Left lung (tissue), 14 donors: ENCODE measurements at regions of chr5 and their contacts with region 1.

Region 1: DNA sequence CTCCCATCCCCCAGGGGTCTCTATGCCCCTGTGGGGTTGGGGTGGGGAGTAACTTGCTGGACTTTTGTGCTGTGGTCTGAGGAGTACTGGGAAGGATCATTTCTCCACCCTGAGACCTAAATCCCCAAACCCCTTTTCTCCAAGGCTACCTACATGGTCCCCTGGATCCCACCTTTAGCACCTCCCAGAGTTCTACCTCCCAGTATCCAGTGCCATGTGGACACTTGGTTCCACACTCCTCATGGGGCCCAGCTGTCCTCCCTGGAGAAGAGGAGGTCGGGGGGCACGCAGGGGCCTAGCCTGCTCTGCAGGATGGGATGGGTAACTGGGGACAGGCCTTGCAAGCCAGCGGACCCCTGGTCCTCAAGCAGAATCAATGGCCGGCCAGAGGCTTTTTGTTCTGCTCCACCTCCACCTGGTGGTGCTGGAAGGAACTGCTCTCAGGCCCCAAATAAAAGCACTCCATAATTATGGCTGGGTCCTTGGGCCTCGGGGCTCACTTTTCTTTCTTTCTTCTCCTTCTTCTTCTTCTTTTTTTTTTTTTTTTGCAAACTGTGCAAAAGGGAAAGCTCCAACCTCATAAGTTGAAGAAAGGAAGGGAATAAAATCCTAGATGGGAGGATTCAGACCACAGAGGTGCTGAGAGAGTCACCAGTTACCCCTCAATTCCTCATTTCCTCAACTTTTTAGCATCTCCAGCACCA is 68.4 kb downstream of the PSD2 start:
- DNase-seq: peak in 2 of 4 donors; percentile 63 to 80
- ATAC-seq: peak; percentile 90
- H3K4me3 ChIP-seq: no peak overlapping the region
- H3K27ac ChIP-seq: peak overlapping the region in 1 of 2 donors; percentile 8
- H3K4me1 ChIP-seq: peaks cover 4 to 11% of the 10 kb centered on the region in 2 donors
- H3K27me3 ChIP-seq: no peaks in the 10 kb centered on the region
- CTCF ChIP-seq: peak; percentile 83 to 93

Region 2: GRCh38 chr5:139787568-139788293 is 76.3 kb before region 1 on chr5:
- intact Hi-C with region 1: loop called in 1 of 2 experiments (anchors 5 kb)
- DNase-seq: peak; percentile 79 to 95 (median 84)
- ATAC-seq: peak; percentile 97
- H3K4me3 ChIP-seq: peak overlapping the region; percentile 42 to 52
- H3K27ac ChIP-seq: peak overlapping the region in 1 of 2 donors; percentile 18
- H3K4me1 ChIP-seq: peaks cover 0 to 13% of the 10 kb centered on the region in 2 donors
- H3K27me3 ChIP-seq: peaks cover 0 to 37% of the 10 kb centered on the region in 2 donors
- CTCF ChIP-seq: peak; percentile 88 to 95

Region 3: GRCh38 chr5:139810341-139811273 is 53.4 kb before region 1 on chr5:
- intact Hi-C with region 1: no loop called
- DNase-seq: no peak
- ATAC-seq: no peak
- H3K4me3 ChIP-seq: no peak overlapping the region
- H3K27ac ChIP-seq: no peak overlapping the region
- H3K4me1 ChIP-seq: no peaks in the 10 kb centered on the region
- H3K27me3 ChIP-seq: peaks cover 0 to 29% of the 10 kb centered on the region in 2 donors
- CTCF ChIP-seq: no peak

Region 4: DNA sequence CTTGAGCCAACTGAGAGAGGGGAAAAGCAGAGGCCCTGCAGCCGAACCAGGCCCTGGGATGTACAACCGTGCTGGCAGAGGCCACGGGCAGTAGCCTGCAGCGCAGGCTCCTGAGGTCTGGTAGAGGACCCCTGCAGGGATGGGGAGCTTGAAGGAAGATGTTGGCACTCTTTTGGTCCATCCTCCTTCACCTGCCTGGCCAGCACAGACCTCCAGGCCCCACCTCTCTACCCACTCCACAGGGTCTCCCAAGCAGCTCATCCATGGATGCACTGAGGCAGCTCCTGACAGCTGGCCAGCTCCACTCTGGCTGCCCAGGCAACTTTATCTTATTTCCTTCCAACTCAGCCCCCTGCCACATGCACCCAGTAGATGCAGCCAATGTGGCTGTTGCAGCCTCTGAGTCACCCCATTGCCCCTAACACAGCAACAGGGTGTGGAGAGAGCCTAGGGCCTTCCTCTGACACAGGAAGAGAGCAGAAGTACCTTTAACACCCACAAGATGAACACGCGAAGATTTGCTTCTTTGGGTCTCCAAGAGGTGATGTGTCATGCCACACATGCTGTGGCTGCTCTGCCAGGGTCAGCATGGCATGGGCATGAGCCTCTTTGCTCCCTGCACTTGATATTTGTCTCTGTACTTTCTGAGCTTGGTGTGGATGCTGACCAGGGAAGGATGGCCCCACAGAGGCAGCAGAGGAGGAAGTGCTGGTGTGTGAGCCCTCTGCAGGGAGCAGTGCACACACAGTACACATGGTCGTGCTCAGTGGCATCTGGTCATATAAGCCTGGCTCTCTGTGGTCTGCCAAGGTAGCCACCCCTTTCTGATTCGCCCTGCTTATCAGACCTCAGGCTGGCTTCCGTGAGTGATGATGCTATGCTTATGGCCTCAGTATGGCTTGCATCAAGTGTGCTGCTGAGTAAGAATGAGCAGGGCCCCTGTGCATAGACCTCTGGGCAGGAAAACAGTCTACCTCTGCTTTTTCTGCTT is 61.9 kb after region 1 on chr5:
- intact Hi-C with region 1: no loop called
- DNase-seq: no peak
- ATAC-seq: no peak
- H3K4me3 ChIP-seq: no peak overlapping the region
- H3K27ac ChIP-seq: no peak overlapping the region
- H3K4me1 ChIP-seq: no peaks in the 10 kb centered on the region
- H3K27me3 ChIP-seq: no peaks in the 10 kb centered on the region
- CTCF ChIP-seq: no peak

Region 5: GRCh38 chr5:140084541-140084940 is 220.5 kb after region 1 on chr5:
- intact Hi-C with region 1: no loop called
- DNase-seq: peak in 1 of 4 donors; percentile 15
- ATAC-seq: peak; percentile 93
- H3K4me3 ChIP-seq: no peak overlapping the region
- H3K27ac ChIP-seq: no peak overlapping the region
- H3K4me1 ChIP-seq: no peaks in the 10 kb centered on the region
- H3K27me3 ChIP-seq: peaks cover 0 to 14% of the 10 kb centered on the region in 2 donors
- CTCF ChIP-seq: no peak

Region 6: DNA sequence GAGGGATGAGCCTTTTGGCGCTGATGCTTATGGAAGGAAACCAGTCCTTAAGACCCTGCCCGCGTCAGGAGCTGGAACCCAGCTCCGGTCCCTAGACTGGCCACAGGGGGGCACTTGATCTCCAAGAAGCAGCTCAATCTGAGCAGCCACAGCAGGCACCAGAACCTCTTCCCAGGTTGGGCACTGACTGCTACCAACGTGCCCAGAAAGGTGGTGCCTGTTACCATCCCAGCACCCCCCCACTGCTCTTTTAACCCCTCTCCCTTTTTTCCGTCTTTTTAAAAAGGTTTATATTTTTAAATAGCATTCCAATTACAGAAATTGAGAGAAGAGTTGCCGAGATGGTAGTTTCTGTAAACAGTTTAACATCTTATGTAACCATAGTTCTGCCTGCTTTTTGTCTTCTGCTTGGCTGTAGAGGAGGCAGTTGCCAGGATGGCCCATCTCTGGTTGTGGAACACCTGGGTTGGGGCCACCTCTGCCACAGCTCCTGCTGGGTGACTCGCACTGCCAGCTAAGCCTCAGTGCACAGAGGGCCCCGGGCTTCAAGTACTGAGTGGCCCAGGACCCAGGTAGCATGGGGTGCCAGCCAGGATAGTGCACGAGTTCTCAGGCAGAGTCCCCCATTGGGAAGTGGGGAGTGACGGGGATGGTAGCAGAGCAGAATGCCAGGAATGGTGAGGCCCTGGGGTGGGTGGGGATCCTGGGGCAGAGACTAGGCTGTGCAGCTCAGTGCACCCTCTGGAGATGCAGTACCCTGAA is 376.1 kb after region 1 on chr5:
- intact Hi-C with region 1: no loop called
- DNase-seq: peak in 2 of 4 donors; percentile 59 to 66
- ATAC-seq: peak; percentile 52
- H3K4me3 ChIP-seq: no peak overlapping the region
- H3K27ac ChIP-seq: no peak overlapping the region
- H3K4me1 ChIP-seq: peaks cover 16 to 68% of the 10 kb centered on the region in 2 donors
- H3K27me3 ChIP-seq: no peaks in the 10 kb centered on the region
- CTCF ChIP-seq: peak; percentile 51 to 76